Naive thymus-derived CD4-positive, alpha-beta T cell (primary cell): ENCODE measurements at regions of chr17 and their contacts with region 1.

Region 1: GRCh38 chr17:43170766-43171585 is at the start of gene NBR1:
- DNase-seq: peak; percentile 78 to 98 (median 97)
- ATAC-seq: peak; percentile 85
- H3K4me3 ChIP-seq: peak within 1 kb of the TSS; percentile 64
- H3K4me3 Mint-ChIP-seq: no peak within 1 kb of the TSS
- H3K27ac ChIP-seq: peak within 1 kb of the TSS; percentile 97
- H3K27ac Mint-ChIP-seq: no peak within 1 kb of the TSS
- H3K4me1 ChIP-seq: peaks cover 30 to 33% of the 10 kb centered on the region in 2 donors
- H3K4me1 Mint-ChIP-seq: peaks cover 21 to 46% (median 32%) of the 10 kb centered on the region in 7 donors
- H3K27me3 ChIP-seq: no peaks in the 10 kb centered on the region
- H3K27me3 Mint-ChIP-seq: no peaks in the 10 kb centered on the region
- total RNA-seq, gene NBR1: 44.6 to 83.0 (median 64.3) TPM

Region 2: DNA sequence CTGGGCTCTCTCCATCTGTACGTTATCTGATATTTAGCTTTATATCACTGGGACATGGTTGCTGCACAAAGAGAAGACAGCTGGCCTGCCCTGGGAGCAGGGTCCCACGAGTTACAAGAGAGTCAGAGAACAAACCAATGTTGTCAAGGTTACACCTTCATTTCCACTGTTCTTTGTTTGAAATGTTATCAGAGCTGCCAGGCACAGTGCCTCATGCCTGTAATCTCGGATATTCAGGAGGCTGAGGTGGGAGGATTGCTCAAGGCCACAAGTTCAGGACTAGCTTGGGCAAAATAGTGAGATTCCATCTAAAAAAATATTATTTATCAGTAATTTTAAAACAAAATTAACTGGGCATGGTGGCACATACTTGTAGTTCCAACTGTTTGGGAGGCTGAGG is 677.7 kb before region 1 on chr17:
- CTCF ChIA-PET with region 1: no interaction called
- POLR2A ChIA-PET with region 1: no interaction called
- intact Hi-C with region 1: no loop called
- DNase-seq: no peak
- ATAC-seq: no peak
- H3K4me3 ChIP-seq: no peak overlapping the region
- H3K4me3 Mint-ChIP-seq: no peak overlapping the region
- H3K27ac ChIP-seq: no peak overlapping the region
- H3K27ac Mint-ChIP-seq: no peak overlapping the region
- H3K4me1 ChIP-seq: peaks cover 4 to 9% of the 10 kb centered on the region in 2 donors
- H3K4me1 Mint-ChIP-seq: peaks cover 2 to 10% (median 8%) of the 10 kb centered on the region in 7 donors
- H3K27me3 ChIP-seq: no peaks in the 10 kb centered on the region
- H3K27me3 Mint-ChIP-seq: peaks cover 0 to 9% (median 3%) of the 10 kb centered on the region in 5 donors

Region 3: GRCh38 chr17:42832974-42833766 is 337.8 kb before region 1 on chr17 and contains the start of gene PSME3:
- CTCF ChIA-PET with region 1: no interaction called
- POLR2A ChIA-PET with region 1: interaction called, 4 read pairs
- intact Hi-C with region 1: loop called (anchors 1 kb)
- DNase-seq: peak; percentile 83 to 91 (median 89)
- ATAC-seq: peak; percentile 94
- H3K4me3 ChIP-seq: peak within 1 kb of the TSS; percentile 100
- H3K4me3 Mint-ChIP-seq: peak within 1 kb of the TSS; percentile 95 to 98 (median 97)
- H3K27ac ChIP-seq: peak within 1 kb of the TSS; percentile 98
- H3K27ac Mint-ChIP-seq: peak within 1 kb of the TSS; percentile 97 to 100 (median 99)
- H3K4me1 ChIP-seq: peaks cover 10 to 16% of the 10 kb centered on the region in 2 donors
- H3K4me1 Mint-ChIP-seq: peaks cover 11 to 40% (median 33%) of the 10 kb centered on the region in 7 donors
- H3K27me3 ChIP-seq: no peaks in the 10 kb centered on the region
- H3K27me3 Mint-ChIP-seq: peaks cover 0 to 7% (median 2%) of the 10 kb centered on the region in 5 donors
- total RNA-seq, gene PSME3: 53.8 to 116 (median 65.9) TPM

Region 4: DNA sequence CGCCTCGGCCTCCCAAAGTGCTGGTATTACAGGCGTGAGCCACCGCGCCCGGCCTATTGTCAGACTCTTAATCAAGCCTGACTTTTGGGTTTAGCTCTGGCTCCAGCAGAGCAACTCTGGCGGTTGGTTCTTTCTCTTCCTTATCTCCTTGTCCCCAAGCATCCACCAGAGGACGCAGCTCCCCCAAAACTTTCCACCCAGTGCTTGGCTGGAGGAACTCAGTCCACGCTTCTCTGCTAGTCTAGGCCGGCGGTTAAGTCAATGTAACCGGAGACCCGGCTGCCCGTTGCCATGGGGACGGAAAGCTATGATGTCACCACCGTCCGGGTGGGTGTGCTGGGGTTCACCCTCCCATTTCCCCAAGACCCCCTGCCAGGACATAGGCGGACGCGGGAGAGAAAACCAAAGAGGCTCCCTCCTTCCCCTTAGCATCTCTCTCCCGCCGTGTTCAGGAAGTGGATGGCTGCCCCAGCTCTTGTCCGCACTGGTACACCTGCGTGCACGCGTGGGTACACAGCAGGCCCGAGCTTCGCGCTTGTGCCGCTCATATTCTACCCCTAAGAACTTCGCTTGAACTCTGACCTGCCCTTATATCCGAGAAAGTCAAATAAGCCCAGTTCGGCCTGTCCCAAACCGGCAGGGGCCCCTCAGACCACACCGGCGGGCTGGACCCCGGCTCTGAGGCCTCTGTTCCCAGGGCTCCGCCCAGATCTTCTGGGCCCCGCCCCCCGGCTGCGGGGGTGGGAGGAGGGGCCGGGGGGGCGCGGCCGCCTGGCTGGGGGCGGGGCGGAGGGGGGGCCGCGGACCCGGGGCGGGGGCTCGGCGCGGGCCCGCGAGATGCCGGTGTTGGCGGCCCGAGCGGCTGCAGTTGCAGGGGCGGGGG is 146.3 kb before region 1 on chr17 and contains the start of gene RND2:
- CTCF ChIA-PET with region 1: no interaction called
- POLR2A ChIA-PET with region 1: no interaction called
- intact Hi-C with region 1: loop called (anchors 1 to 5 kb)
- DNase-seq: peak; percentile 65 to 85 (median 77)
- ATAC-seq: peak; percentile 81
- H3K4me3 ChIP-seq: peak within 1 kb of the TSS; percentile 70
- H3K4me3 Mint-ChIP-seq: peak within 1 kb of the TSS; percentile 86 to 95 (median 93)
- H3K27ac ChIP-seq: peak within 1 kb of the TSS; percentile 66
- H3K27ac Mint-ChIP-seq: peak within 1 kb of the TSS; percentile 80 to 91 (median 88)
- H3K4me1 ChIP-seq: peaks cover 21% of the 10 kb centered on the region in 2 donors
- H3K4me1 Mint-ChIP-seq: peaks cover 16 to 28% (median 21%) of the 10 kb centered on the region in 7 donors
- H3K27me3 ChIP-seq: no peaks in the 10 kb centered on the region
- H3K27me3 Mint-ChIP-seq: peaks cover 0 to 16% (median 0%) of the 10 kb centered on the region in 5 donors
- total RNA-seq, gene RND2: 0.08 to 0.74 (median 0.38) TPM in 4 of 5 experiments, not detected in the other

Region 5: DNA sequence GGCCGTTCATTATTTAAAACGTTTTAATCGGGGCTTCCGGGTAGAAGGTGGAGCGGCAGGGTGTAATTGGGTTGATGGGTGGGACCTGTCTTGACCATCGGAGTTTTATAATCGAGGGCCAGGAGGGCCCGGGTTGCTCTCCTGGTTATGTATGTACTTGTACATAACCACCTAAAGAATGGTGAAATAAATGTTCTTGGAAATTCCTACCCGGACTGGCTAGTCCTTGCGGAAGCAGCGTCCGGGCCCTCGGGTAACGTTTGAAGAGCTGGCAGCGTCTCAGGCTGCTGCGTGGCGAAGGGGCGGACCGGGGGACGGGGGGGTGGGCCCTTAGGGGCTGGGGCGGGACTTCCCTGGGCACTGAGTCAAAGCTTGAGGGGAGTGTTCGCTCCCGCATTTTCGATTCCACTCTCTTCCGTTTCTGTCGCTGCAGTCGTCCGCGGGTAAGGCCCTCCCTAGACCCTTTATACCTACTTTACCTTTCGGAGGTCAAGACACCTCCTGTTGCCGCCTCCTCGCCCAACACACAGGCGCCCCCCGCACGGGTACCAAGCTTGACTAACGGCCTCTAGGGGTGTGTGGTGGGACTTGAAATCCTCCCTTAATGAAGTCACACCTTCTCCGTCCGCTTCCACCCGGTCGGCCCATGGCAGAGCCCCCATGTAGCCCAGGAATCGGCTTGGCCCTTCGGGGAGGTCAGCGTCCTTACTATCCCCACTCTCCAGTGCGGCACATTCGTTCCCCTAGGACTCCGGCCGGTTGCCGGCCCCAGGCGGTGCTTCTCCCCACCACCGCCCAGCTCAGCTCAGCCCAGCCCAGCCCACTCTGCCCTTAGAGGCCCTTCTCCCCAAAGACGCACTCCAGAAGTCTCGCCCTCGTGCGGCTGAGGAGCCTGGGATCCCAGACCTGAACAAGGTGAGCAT is 40.8 kb after region 1 on chr17 and contains the start of gene TMEM106A:
- CTCF ChIA-PET with region 1: no interaction called
- POLR2A ChIA-PET with region 1: interaction called, 13 read pairs
- intact Hi-C with region 1: loop called (anchors 1 kb)
- DNase-seq: peak; percentile 50 to 72 (median 70)
- ATAC-seq: peak; percentile 93
- H3K4me3 ChIP-seq: peak within 1 kb of the TSS; percentile 89
- H3K4me3 Mint-ChIP-seq: peak within 1 kb of the TSS; percentile 89 to 100 (median 96)
- H3K27ac ChIP-seq: peak within 1 kb of the TSS; percentile 86
- H3K27ac Mint-ChIP-seq: peak within 1 kb of the TSS; percentile 89 to 98 (median 94)
- H3K4me1 ChIP-seq: peaks cover 15 to 17% of the 10 kb centered on the region in 2 donors
- H3K4me1 Mint-ChIP-seq: peaks cover 24 to 55% (median 46%) of the 10 kb centered on the region in 7 donors
- H3K27me3 ChIP-seq: no peaks in the 10 kb centered on the region
- H3K27me3 Mint-ChIP-seq: no peaks in the 10 kb centered on the region
- total RNA-seq, gene TMEM106A: 10.4 to 20.7 (median 13.9) TPM

Region 6: GRCh38 chr17:43360739-43361505 is 189.9 kb after region 1 on chr17:
- CTCF ChIA-PET with region 1: no interaction called
- POLR2A ChIA-PET with region 1: interaction called, 14 read pairs
- intact Hi-C with region 1: loop called (anchors 1 kb)
- DNase-seq: peak; percentile 69 to 97 (median 91)
- ATAC-seq: peak; percentile 88
- H3K4me3 ChIP-seq: peak overlapping the region; percentile 71
- H3K4me3 Mint-ChIP-seq: peak overlapping the region; percentile 87 to 99 (median 96)
- H3K27ac ChIP-seq: peak overlapping the region; percentile 95
- H3K27ac Mint-ChIP-seq: peak overlapping the region; percentile 98 to 100 (median 100)
- H3K4me1 ChIP-seq: peaks cover 13 to 14% of the 10 kb centered on the region in 2 donors
- H3K4me1 Mint-ChIP-seq: peaks cover 9 to 56% (median 38%) of the 10 kb centered on the region in 7 donors
- H3K27me3 ChIP-seq: no peaks in the 10 kb centered on the region
- H3K27me3 Mint-ChIP-seq: peaks cover 0 to 9% (median 0%) of the 10 kb centered on the region in 5 donors

Region 7: GRCh38 chr17:43483674-43484372 is 312.8 kb after region 1 on chr17 and contains the start of gene DHX8:
- CTCF ChIA-PET with region 1: no interaction called
- POLR2A ChIA-PET with region 1: interaction called, 6 read pairs
- intact Hi-C with region 1: loop called (anchors 1 kb)
- DNase-seq: peak; percentile 96 to 100 (median 99)
- ATAC-seq: peak; percentile 99
- H3K4me3 ChIP-seq: peak within 1 kb of the TSS; percentile 90
- H3K4me3 Mint-ChIP-seq: peak within 1 kb of the TSS; percentile 98 to 100 (median 100)
- H3K27ac ChIP-seq: peak within 1 kb of the TSS; percentile 87
- H3K27ac Mint-ChIP-seq: peak within 1 kb of the TSS; percentile 91 to 100 (median 98)
- H3K4me1 ChIP-seq: peaks cover 21 to 29% of the 10 kb centered on the region in 2 donors
- H3K4me1 Mint-ChIP-seq: peaks cover 19 to 52% (median 36%) of the 10 kb centered on the region in 7 donors
- H3K27me3 ChIP-seq: no peaks in the 10 kb centered on the region
- H3K27me3 Mint-ChIP-seq: no peaks in the 10 kb centered on the region
- total RNA-seq, gene DHX8: 67.7 to 93.4 (median 77.8) TPM